ENCODE measurements at regions of chr3 and their contacts with region 1.

Region 1: GRCh38 chr3:20185701-20186598 is at the start of gene SGO1:
- DNase-seq: peak; percentile 100
- ATAC-seq: peak; percentile 94
- H3K4me3 Mint-ChIP-seq: no peak within 1 kb of the TSS
- H3K27ac Mint-ChIP-seq: no peak within 1 kb of the TSS
- H3K4me1 Mint-ChIP-seq: peaks cover 6% of the 10 kb centered on the region
- H3K27me3 Mint-ChIP-seq: no peaks in the 10 kb centered on the region
- total RNA-seq, gene SGO1: 29.4 to 39.2 TPM

Region 2: DNA sequence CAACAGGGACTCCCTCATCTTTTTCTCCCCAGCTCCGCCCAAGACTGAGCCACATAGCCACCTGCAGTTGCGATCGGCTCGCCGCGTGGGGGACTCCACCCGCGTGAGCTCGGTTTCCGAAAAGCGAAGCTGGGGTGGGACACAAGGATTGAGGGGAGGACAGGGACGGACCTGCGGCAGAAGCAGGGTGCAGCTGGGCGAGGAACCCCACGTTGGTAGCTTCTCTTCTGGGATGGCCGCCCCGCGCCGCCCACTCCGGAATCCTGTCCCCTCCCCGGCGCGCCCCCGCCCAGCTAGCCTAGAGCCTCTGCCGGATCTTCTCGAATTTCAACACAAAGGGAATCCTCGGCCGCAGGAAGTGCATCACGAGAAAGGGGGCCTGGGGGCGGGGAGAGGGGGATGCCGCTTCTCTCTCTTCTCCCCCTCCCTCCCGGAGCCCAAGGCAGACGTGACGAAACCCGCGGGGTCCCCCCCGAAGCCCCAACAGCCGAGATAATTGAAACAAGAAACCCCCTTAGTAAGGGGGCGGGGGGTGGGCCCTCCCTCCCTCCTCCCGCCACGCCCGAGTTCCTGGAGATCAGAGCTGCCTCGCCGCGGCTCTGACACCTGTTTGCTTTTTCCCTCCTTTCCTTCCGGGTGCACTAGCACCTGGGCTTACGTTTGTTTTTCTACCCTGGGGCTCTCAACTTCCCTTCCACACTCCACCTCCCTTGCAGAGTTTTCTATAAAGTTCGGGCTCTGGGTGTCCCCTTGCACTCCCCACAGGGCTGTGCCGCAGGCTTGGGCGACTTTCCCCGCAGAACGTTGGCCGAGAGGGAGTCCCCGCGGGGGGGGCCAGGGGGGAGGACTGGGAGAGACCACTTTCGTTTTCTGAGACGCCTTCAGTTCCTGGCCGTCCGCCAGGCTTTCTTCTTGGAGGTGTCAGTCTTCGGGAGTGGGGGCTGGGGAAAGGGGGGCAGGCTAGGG is 1039.0 kb before region 1 on chr3:
- CTCF ChIA-PET with region 1: no interaction called
- POLR2A ChIA-PET with region 1: no interaction called
- intact Hi-C with region 1: loop called in 1 of 2 experiments (anchors 1 kb)
- DNase-seq: peak; percentile 79
- ATAC-seq: peak; percentile 81
- H3K4me3 Mint-ChIP-seq: peak overlapping the region; percentile 81
- H3K27ac Mint-ChIP-seq: peak overlapping the region; percentile 73
- H3K4me1 Mint-ChIP-seq: peaks cover 15% of the 10 kb centered on the region
- H3K27me3 Mint-ChIP-seq: peaks cover 38% of the 10 kb centered on the region

Region 3: GRCh38 chr3:19885468-19885867 is 300.5 kb before region 1 on chr3:
- CTCF ChIA-PET with region 1: interaction called, 4 read pairs
- POLR2A ChIA-PET with region 1: no interaction called
- intact Hi-C with region 1: loop called in 1 of 2 experiments (anchors 1 kb)
- DNase-seq: peak; percentile 9
- ATAC-seq: peak; percentile 36
- H3K4me3 Mint-ChIP-seq: no peak overlapping the region
- H3K27ac Mint-ChIP-seq: no peak overlapping the region
- H3K4me1 Mint-ChIP-seq: no peaks in the 10 kb centered on the region
- H3K27me3 Mint-ChIP-seq: no peaks in the 10 kb centered on the region

Region 4: GRCh38 chr3:19931180-19931692 is 254.7 kb before region 1 on chr3:
- CTCF ChIA-PET with region 1: interaction called, 4 read pairs
- POLR2A ChIA-PET with region 1: no interaction called
- intact Hi-C with region 1: loop called (anchors 1 to 5 kb)
- DNase-seq: peak; percentile 71
- ATAC-seq: peak; percentile 82
- H3K4me3 Mint-ChIP-seq: peak overlapping the region; percentile 21
- H3K27ac Mint-ChIP-seq: peak overlapping the region; percentile 83
- H3K4me1 Mint-ChIP-seq: peaks cover 32% of the 10 kb centered on the region
- H3K27me3 Mint-ChIP-seq: peaks cover 12% of the 10 kb centered on the region

Region 5: DNA sequence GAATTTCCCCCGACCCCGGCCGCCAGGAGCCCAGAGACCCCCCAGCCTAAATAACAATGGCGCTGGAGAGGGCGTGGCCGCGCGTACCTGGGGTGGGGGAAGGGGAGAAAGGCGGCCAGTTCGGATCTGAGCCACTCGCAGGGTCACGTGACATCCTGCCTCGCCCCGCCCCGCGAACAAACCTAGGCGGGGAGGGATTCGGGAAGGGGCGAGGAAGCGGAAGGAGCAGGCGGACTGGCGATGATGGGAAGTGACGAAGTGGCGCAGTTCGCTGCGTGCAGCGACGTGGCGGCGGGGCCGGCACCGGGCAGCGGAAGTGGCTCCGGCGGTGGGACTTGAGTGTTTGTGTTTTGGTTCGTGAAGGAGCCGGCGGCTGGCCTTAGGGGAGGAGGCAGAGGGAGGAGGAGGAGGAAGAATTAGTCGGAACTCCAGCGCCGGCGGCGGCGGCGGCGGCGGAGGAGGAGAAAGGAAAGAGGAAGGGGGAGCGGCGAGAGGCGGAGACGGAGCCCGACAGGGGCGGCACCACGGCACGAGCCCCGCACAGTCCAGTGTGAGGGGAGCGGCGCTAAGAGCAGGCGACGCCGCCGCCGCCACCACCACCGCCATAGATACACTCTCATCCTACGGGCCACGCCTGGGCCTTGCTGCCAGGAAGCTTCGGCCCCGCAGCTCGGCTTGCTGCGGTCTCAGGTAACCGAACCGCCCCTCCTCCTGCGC is 239.0 kb before region 1 on chr3 and contains the start of gene RAB5A:
- CTCF ChIA-PET with region 1: no interaction called
- POLR2A ChIA-PET with region 1: interaction called, 3 read pairs
- intact Hi-C with region 1: loop called (anchors 1 kb)
- DNase-seq: peak; percentile 99
- ATAC-seq: peak; percentile 90
- H3K4me3 Mint-ChIP-seq: peak within 1 kb of the TSS; percentile 96
- H3K27ac Mint-ChIP-seq: peak within 1 kb of the TSS; percentile 99
- H3K4me1 Mint-ChIP-seq: peaks cover 40% of the 10 kb centered on the region
- H3K27me3 Mint-ChIP-seq: no peaks in the 10 kb centered on the region
- total RNA-seq, gene RAB5A: 54.2 to 78.8 TPM

Region 6: GRCh38 chr3:20039766-20040475 is 146.0 kb before region 1 on chr3 and contains the start of gene KAT2B:
- CTCF ChIA-PET with region 1: interaction called, 4 read pairs
- POLR2A ChIA-PET with region 1: interaction called, 3 read pairs
- intact Hi-C with region 1: loop called (anchors 1 kb)
- DNase-seq: peak; percentile 91
- ATAC-seq: peak; percentile 68
- H3K4me3 Mint-ChIP-seq: peak within 1 kb of the TSS; percentile 95
- H3K27ac Mint-ChIP-seq: peak within 1 kb of the TSS; percentile 93
- H3K4me1 Mint-ChIP-seq: peaks cover 50% of the 10 kb centered on the region
- H3K27me3 Mint-ChIP-seq: no peaks in the 10 kb centered on the region
- total RNA-seq, gene KAT2B: 17.2 to 18.5 TPM

Region 7: DNA sequence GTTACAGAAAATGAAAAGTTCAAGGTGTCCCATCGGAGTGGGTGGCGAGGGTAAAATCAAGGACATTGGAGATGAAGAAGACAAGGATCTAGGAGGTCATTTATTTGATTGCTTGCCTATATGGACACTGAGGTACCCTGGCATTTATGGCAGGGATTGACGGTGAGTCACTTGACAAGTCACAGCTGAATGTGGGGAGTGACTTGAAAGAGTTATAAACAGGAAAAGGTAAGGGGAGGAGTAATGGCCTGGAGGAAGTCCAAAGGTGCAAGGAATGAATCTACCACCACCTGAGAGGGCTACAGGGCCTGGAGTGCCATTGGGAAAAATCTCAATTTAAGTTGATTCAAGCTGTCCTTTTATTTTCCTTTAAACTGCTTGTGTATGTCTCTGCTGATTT is 11.8 kb after region 1 on chr3:
- CTCF ChIA-PET with region 1: interaction called, 12 read pairs
- POLR2A ChIA-PET with region 1: no interaction called
- intact Hi-C with region 1: no loop called
- DNase-seq: no peak
- ATAC-seq: no peak
- H3K4me3 Mint-ChIP-seq: no peak overlapping the region
- H3K27ac Mint-ChIP-seq: no peak overlapping the region
- H3K4me1 Mint-ChIP-seq: peaks cover 5% of the 10 kb centered on the region
- H3K27me3 Mint-ChIP-seq: no peaks in the 10 kb centered on the region